Heart left ventricle (tissue), 16 donors: ENCODE measurements at regions of chr12 and their contacts with region 1.

Region 1: DNA sequence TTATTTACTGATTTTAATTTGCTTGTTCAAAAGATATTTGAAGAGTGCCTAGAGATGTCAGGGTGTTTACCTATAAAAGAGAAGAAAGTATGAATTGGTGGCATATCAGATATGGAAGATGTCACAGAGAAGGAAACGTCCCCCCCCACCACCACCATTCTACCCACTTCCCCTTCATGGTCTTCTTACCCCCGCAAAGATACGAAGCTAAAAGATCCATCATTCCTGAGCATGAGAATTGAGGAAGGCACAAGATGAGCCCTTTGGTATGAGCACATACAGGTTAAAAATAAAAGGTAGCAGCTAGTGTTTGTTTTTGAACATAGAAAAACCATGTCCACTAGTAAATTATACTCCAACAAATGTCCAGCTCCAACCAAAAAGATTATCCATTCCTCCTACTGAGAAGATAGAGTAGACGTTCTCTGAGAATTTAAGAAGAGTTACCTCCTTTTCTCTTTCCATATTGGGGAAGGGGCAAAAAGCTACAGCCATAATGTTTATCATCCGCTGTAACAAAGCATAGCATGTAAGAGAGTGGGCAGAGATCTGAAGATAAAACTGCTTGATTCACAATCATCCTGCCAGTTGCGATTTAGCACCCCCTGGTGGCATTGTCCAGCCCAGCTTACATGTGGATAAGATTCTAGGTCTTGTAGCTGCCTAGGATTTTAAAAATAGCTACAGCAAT is 29.1 kb downstream of the NFYB start:
- DNase-seq: peak; percentile 63 to 76 (median 73)
- ATAC-seq: peak; percentile 32 to 89 (median 76)
- H3K4me3 ChIP-seq: no peak overlapping the region
- H3K27ac ChIP-seq: no peak overlapping the region
- H3K4me1 ChIP-seq: peaks cover 0 to 19% (median 8%) of the 10 kb centered on the region in 12 donors
- H3K27me3 ChIP-seq: no peaks in the 10 kb centered on the region
- CTCF ChIP-seq: peak; percentile 73 to 91 (median 86)
- POLR2A ChIP-seq: no peak

Region 2: DNA sequence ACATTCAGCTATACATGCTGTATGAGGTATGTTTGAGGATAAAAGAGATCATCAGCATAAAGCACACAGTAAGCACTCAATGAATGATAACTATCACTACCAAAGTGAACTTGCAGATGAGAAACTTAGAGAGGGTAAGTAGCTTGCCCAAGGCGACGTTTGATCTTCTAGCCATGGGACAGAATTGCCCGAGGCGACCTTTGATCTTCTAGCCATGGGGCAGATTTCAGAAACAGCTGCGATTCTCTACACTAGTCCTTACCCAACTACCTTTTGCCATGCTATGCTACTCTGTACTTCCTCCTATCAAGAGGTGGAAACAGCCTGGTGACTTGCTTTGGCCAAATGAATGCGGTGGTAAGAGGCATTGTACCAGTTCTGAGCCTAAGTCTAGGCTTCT is 244.2 kb before region 1 on chr12:
- intact Hi-C with region 1: no loop called
- DNase-seq: no peak
- ATAC-seq: no peak
- H3K4me3 ChIP-seq: no peak overlapping the region
- H3K27ac ChIP-seq: no peak overlapping the region
- H3K4me1 ChIP-seq: no peaks in the 10 kb centered on the region
- H3K27me3 ChIP-seq: no peaks in the 10 kb centered on the region
- CTCF ChIP-seq: no peak
- POLR2A ChIP-seq: no peak

Region 3: GRCh38 chr12:103884316-103884715 is 224.6 kb before region 1 on chr12:
- intact Hi-C with region 1: loop called in 9 of 10 experiments (anchors 2 to 10 kb)
- DNase-seq: no peak
- ATAC-seq: no peak
- H3K4me3 ChIP-seq: no peak overlapping the region
- H3K27ac ChIP-seq: no peak overlapping the region
- H3K4me1 ChIP-seq: peaks cover 0 to 13% (median 0%) of the 10 kb centered on the region in 12 donors
- H3K27me3 ChIP-seq: no peaks in the 10 kb centered on the region
- CTCF ChIP-seq: peak in 9 of 12 donors; percentile 10 to 55 (median 32)
- POLR2A ChIP-seq: no peak

Region 4: GRCh38 chr12:103956516-103957027 is 152.3 kb before region 1 on chr12:
- intact Hi-C with region 1: loop called in 3 of 10 experiments (anchors 5 to 10 kb)
- DNase-seq: peak in 1 of 5 donors; percentile 68
- ATAC-seq: peak; percentile 25 to 57 (median 46)
- H3K4me3 ChIP-seq: peak overlapping the region; percentile 53 to 90 (median 80)
- H3K27ac ChIP-seq: peak overlapping the region; percentile 84 to 98 (median 95)
- H3K4me1 ChIP-seq: peaks cover 7 to 31% (median 20%) of the 10 kb centered on the region in 12 donors
- H3K27me3 ChIP-seq: no peaks in the 10 kb centered on the region
- CTCF ChIP-seq: no peak
- POLR2A ChIP-seq: no peak

Region 5: GRCh38 chr12:104057771-104058197 is 51.1 kb before region 1 on chr12:
- intact Hi-C with region 1: loop called in 2 of 10 experiments (anchors 2 to 5 kb)
- DNase-seq: no peak
- ATAC-seq: no peak
- H3K4me3 ChIP-seq: no peak overlapping the region
- H3K27ac ChIP-seq: no peak overlapping the region
- H3K4me1 ChIP-seq: peaks cover 0 to 20% (median 6%) of the 10 kb centered on the region in 12 donors
- H3K27me3 ChIP-seq: no peaks in the 10 kb centered on the region
- CTCF ChIP-seq: peak; percentile 26 to 61 (median 50)
- POLR2A ChIP-seq: no peak